ENCODE measurements at regions of chr16 and their contacts with region 1.

Region 1: DNA sequence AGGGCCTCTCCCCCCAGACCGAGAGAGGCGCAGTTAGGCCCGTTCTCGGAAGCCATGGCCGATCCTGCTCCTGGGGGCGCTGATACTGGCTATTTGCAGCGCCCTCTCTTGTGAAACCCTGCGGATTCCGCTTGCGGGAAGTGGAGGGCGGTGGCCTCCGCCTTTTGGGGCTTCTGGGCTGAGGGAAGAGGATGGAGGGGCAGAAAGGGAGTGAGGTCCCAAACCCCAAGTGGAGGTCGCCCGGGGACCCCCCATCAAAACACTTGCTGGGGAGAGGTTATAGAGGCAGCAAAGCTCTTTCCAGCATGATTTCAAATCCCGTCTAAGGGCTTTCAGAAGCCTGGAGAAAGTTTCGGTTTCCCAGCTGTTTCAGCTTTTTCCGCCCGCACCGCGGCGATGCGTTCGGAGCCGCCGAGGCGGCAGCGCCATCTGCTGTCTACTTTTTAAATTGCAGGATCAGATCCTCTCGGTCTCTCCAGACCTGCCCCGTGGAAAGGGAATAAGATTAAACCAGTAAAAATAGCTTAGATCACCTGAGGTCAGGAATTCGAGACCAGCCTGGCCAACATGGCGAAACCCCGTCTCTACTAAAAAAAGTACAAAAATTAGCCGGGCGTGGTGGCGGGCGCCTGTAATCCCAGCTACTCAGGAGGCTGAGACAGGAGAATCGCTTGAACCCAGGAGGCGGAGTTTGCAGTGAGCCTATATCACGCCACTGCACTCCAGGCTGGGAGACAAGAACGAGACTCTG is 15.8 kb downstream of the SNX20 start:
- DNase-seq: peak in 9 of 10 donors; percentile 59 to 85 (median 73)
- H3K4me3 ChIP-seq: peak overlapping the region; percentile 13 to 70 (median 49)
- H3K27ac ChIP-seq: peak overlapping the region in 41 of 59 donors; percentile 5 to 86 (median 45)
- H3K27me3 ChIP-seq: no peaks in the 10 kb centered on the region
- CTCF ChIP-seq: peak; percentile 85 to 97 (median 94)

Region 2: DNA sequence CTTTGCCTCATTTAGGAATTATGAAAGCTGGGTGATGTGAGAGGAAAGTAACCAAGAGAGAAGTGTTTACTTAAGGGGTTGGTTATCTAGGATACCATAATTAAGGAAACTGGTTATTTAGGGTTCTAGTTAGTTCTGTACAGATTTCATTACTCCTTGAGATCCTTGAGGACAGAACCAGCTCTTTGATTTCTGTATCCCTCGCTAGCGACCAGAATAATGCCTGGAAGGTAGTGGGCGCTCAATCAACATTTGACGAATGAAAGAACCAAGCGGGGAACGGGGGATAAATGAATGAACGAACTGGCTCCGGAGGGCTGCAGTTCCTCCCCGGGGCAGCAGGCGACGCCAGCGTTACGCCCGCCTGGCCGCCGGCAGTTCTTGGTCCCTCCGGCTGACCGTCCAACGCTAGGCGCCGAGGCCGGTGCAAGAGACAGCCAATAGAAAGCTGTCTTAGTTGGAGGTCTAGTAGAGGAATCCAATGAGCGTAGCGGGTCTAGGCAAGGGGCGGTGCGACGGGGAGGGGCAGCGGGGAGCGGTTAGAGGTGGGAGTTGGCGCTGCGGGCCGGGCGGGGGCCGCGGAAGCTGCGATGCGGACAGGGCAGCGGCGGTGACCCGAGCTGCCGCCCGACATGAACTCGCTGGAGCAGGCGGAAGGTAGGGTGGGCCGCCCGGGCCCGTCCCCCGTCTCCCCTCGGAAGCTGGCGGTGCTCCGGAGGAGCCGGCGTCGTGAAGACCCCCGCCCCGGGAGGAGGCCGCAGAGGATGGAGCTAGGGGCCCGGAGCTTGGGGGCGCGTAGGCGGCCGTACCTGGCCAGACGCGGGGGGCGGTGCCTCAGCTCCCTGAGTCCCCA is 640.4 kb before region 1 on chr16 and contains the start of gene CNEP1R1:
- intact Hi-C with region 1: loop called in 1 of 2 experiments (anchors 10 kb)
- DNase-seq: peak; percentile 87 to 95 (median 94)
- H3K4me3 ChIP-seq: peak within 1 kb of the TSS; percentile 71 to 100 (median 99)
- H3K27ac ChIP-seq: peak within 1 kb of the TSS in 55 of 59 donors; percentile 27 to 93 (median 81)
- H3K27me3 ChIP-seq: no peaks in the 10 kb centered on the region
- CTCF ChIP-seq: peak; percentile 97 to 100 (median 100)
- total RNA-seq, gene CNEP1R1: 16.8 to 35.7 (median 24.8) TPM

Region 3: DNA sequence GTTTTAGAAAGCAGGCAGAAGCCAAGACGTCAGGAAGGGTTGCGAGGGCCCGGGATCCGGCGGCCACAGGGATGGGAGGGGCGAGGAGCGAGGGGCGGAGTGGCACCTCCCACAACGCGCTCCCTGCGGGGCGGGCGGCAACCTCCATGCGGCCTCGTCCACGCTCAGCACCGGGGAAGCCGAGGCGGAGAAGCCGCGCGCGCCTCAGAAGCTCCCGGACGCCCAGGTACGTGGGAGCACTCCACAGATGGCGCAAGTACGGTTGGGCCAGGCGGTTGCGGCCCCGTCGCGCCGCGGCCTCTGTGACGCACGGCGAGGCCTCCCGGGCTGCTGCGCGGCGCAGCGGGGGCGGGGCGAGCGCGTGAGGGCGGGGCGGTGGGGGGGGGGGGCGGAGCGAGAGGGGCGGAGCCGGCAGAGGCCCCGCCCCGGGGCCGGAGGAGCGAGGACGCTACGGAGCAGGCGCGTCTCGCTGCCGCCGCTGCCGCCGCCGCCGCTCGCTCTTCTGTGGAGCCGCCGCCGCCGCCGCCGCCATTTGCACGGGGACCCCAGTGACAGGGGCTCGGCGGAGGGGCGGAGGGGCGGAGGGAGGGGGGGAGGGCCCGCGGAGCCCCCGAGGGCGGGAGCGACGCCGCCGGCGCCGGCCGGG is 512.4 kb before region 1 on chr16 and contains the start of gene TENT4B:
- intact Hi-C with region 1: loop called in 1 of 2 experiments (anchors 10 kb)
- DNase-seq: peak; percentile 67 to 90 (median 79)
- H3K4me3 ChIP-seq: peak within 1 kb of the TSS; percentile 78 to 97 (median 90)
- H3K27ac ChIP-seq: peak within 1 kb of the TSS; percentile 80 to 98 (median 94)
- H3K27me3 ChIP-seq: no peaks in the 10 kb centered on the region
- CTCF ChIP-seq: peak in 9 of 56 donors; percentile 6 to 42 (median 10)
- total RNA-seq, gene TENT4B: 9.9 to 37.1 (median 18.3) TPM

Region 4: GRCh38 chr16:50245417-50246298 is 419.6 kb before region 1 on chr16:
- intact Hi-C with region 1: loop called in 1 of 2 experiments (anchors 10 kb)
- DNase-seq: peak in 1 of 10 donors; percentile 63
- H3K4me3 ChIP-seq: peak overlapping the region; percentile 41 to 76 (median 65)
- H3K27ac ChIP-seq: peak overlapping the region in 1 of 59 donors; percentile 21
- H3K27me3 ChIP-seq: peaks cover 0 to 19% (median 0%) of the 10 kb centered on the region in 45 donors
- CTCF ChIP-seq: peak in 23 of 56 donors; percentile 12 to 62 (median 34)

Region 5: GRCh38 chr16:50548125-50548908 is 117.0 kb before region 1 on chr16 and contains the start of gene NKD1:
- intact Hi-C with region 1: loop called in 1 of 2 experiments (anchors 10 kb)
- DNase-seq: peak in 9 of 10 donors; percentile 39 to 84 (median 67)
- H3K4me3 ChIP-seq: peak within 1 kb of the TSS; percentile 54 to 94 (median 80)
- H3K27ac ChIP-seq: peak within 1 kb of the TSS in 29 of 59 donors; percentile 14 to 83 (median 59)
- H3K27me3 ChIP-seq: peaks cover 0 to 14% (median 0%) of the 10 kb centered on the region in 45 donors
- CTCF ChIP-seq: peak in 1 of 56 donors; percentile 8
- total RNA-seq, gene NKD1: 3.8 to 25.7 (median 12.7) TPM

Region 6: DNA sequence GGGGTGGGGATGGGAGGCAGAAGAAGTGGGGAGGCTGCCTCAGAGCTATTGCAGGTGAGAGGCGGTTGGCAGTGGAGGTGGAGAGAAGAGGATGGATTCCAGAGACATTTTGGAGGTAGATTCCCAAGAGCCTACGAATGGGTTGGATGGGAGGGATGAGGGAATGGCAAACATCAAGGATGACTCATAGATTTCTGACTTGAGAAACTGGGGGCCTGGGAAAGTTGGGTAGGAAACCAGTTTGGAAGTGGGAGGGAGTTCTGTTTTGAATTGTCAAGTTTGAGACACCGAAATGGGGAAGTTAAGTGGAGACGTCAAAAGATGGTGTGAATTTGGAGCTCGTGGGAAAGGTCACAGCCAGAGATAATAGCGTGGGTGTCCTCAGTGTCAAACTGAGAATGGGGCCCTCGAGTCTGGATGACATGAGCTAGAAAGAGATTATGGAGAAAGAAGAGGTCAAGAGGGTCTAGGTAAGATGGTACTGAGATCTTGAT is 70.4 kb after region 1 on chr16:
- intact Hi-C with region 1: loop called (anchors 5 kb)
- DNase-seq: no peak
- H3K4me3 ChIP-seq: no peak overlapping the region
- H3K27ac ChIP-seq: no peak overlapping the region
- H3K27me3 ChIP-seq: no peaks in the 10 kb centered on the region
- CTCF ChIP-seq: no peak

Region 7: GRCh38 chr16:50806099-50807062 is 141.1 kb after region 1 on chr16:
- intact Hi-C with region 1: loop called (anchors 5 kb)
- DNase-seq: peak; percentile 80 to 93 (median 84)
- H3K4me3 ChIP-seq: peak overlapping the region in 56 of 59 donors; percentile 17 to 62 (median 47)
- H3K27ac ChIP-seq: peak overlapping the region; percentile 69 to 96 (median 92)
- H3K27me3 ChIP-seq: no peaks in the 10 kb centered on the region
- CTCF ChIP-seq: peak; percentile 81 to 100 (median 97)

Region 8: DNA sequence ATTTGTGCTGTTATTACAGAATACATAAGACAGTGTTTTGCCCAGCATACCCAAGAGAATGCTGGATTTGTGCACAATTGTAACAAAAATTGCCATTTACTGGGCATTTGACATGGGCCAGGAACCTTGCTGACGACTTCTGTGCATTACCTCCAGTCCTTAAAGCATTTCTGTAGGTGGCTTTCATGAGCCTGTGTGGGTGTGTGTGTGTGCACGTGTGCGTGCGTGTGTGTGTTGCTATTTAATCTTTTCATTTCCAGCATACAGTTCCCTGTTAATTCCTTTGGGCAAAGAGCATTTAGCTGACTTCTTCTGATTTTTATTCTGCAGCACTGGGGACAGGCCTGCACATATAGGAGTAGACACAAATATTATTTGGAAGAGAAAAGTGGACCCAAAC is 211.0 kb after region 1 on chr16:
- intact Hi-C with region 1: no loop called
- DNase-seq: no peak
- H3K4me3 ChIP-seq: no peak overlapping the region
- H3K27ac ChIP-seq: no peak overlapping the region
- H3K27me3 ChIP-seq: peaks cover 0 to 29% (median 6%) of the 10 kb centered on the region in 45 donors
- CTCF ChIP-seq: no peak

Region 9: GRCh38 chr16:50925758-50926357 is 260.6 kb after region 1 on chr16:
- intact Hi-C with region 1: no loop called
- DNase-seq: no peak
- H3K4me3 ChIP-seq: no peak overlapping the region
- H3K27ac ChIP-seq: no peak overlapping the region
- H3K27me3 ChIP-seq: peaks cover 0 to 19% (median 0%) of the 10 kb centered on the region in 45 donors
- CTCF ChIP-seq: no peak